CD14-positive monocyte (primary cell): ENCODE measurements at regions of chr11 and their contacts with region 1.

Region 1: DNA sequence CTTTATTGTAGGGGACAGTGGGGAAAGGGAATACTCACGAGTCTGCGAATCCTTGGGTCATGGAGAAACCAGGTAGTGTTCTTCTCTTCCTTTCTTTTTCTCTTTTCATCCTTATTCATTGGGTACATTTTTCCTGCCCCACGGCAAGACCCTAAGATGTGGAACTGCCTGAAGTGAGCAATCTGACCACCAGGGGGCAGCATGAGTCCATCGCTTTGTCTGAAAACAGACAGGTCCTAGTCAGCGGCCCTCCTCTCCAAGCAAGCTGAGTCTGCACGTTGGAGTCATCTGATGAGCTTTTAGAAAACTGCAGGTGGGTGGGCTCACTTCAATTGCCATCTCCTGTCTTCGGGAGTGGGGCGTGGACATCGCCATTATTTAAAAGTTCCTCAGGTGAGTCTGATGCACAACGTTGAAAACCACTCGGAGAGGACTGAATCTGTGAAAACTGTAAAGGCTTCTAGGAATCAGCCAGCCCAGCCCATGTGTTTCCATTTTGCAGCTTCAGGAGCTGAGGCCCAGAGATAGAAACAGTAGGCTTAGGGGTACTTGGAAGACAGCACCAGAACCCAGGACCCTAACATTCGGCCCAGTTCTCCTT is 34.0 kb upstream of the FBXO3 start:
- DNase-seq: peak; percentile 69 to 75 (median 75)
- H3K4me3 ChIP-seq: no peak overlapping the region
- H3K4me3 Mint-ChIP-seq: no peak overlapping the region
- H3K27ac ChIP-seq: no peak overlapping the region
- H3K27ac Mint-ChIP-seq: no peak overlapping the region
- H3K4me1 ChIP-seq: no peaks in the 10 kb centered on the region
- H3K4me1 Mint-ChIP-seq: peaks cover 2% of the 10 kb centered on the region
- H3K27me3 ChIP-seq: peaks cover 9 to 20% of the 10 kb centered on the region in 2 donors
- H3K27me3 Mint-ChIP-seq: peaks cover 12 to 25% (median 14%) of the 10 kb centered on the region in 3 donors
- CTCF ChIP-seq: peak; percentile 91

Region 2: DNA sequence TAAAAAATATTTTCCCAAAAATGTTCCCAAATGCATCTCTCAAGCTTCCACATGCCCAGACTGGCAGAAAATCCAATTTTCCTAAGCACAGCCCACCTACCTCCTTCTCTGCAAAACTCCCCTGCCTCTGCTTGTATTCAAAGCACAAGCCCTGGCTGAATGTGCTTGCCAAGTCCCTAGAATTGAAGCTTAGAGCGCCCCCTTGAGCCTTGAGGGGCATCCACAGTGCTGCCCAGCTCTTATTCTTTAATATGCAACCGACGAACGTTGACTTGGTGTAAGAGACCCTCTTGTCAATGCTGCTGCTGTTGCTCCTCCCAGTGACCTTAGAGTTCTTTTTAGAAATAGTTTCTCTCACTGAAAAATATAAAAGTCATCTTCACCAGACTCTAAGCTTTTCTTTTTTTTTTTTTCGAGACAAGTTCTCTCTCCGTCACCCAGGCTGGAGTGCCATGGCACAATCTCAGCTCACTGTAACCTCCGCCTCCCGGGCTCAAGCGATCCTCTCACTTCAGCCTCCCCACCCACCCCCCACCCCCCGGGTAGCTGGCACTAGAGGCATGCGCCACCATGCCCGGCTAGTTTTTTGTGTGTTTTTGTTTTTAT is 179.8 kb after region 1 on chr11:
- intact Hi-C with region 1: loop called in 1 of 2 experiments (anchors 5 kb)
- DNase-seq: peak; percentile 72 to 86 (median 81)
- H3K4me3 ChIP-seq: no peak overlapping the region
- H3K4me3 Mint-ChIP-seq: no peak overlapping the region
- H3K27ac ChIP-seq: no peak overlapping the region
- H3K27ac Mint-ChIP-seq: no peak overlapping the region
- H3K4me1 ChIP-seq: no peaks in the 10 kb centered on the region
- H3K4me1 Mint-ChIP-seq: peaks cover 5% of the 10 kb centered on the region
- H3K27me3 ChIP-seq: no peaks in the 10 kb centered on the region
- H3K27me3 Mint-ChIP-seq: peaks cover 0 to 7% (median 3%) of the 10 kb centered on the region in 3 donors
- CTCF ChIP-seq: peak; percentile 93

Region 3: DNA sequence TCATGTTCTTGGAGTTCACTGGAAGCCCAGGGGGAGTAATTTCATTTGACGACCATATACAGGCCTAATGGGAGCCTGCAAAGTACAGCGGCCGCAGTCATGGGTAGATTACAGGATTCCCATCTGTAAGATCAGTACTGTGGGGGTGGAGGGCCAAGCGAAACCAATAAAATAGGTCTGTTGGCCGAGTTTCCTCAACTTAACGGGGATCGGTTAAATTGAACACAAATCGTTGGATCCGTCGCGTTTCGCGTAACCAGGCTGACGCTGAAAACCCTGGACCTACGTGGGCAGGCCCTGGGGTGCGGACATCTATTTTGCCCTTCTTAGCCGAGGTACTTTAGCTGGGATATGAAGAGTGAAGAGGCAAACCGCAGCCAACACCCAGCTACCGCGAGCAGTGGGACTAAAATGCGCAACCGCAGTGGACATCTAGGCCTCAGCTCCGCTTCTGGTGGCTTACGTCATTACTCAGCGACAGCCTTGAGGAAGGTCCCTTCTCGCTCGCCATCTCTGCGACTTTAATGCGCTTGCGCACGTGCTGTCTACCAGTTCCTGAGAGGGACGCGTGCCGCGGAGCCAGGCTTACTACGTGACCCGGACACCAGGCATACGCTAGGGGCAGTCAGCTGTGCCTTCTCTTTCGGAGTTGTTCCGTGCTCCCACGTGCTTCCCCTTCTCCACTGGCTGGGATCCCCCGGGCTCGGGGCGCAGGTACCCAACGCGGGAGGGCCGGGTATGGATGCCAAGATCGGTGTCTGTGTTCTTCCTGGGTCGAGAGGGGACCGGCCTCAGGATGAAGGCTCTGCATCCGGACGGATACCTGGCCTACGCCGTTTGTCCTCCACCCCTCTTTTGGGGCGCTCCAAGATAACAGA is 297.0 kb after region 1 on chr11 and contains the start of gene NAT10:
- intact Hi-C with region 1: no loop called
- DNase-seq: peak; percentile 100
- H3K4me3 ChIP-seq: peak within 1 kb of the TSS; percentile 47 to 89 (median 82)
- H3K4me3 Mint-ChIP-seq: peak within 1 kb of the TSS; percentile 93 to 94
- H3K27ac ChIP-seq: peak within 1 kb of the TSS; percentile 86 to 98
- H3K27ac Mint-ChIP-seq: peak within 1 kb of the TSS; percentile 96 to 99 (median 98)
- H3K4me1 ChIP-seq: peaks cover 16 to 24% of the 10 kb centered on the region in 2 donors
- H3K4me1 Mint-ChIP-seq: peaks cover 25% of the 10 kb centered on the region
- H3K27me3 ChIP-seq: no peaks in the 10 kb centered on the region
- H3K27me3 Mint-ChIP-seq: no peaks in the 10 kb centered on the region
- CTCF ChIP-seq: peak; percentile 22
- polyA plus RNA-seq, gene NAT10: 10.1 to 13.3 (median 13.1) TPM